ENCODE measurements at regions of chr15 and their contacts with region 1.

Region 1: GRCh38 chr15:90001683-90002427 is 731 bp downstream of the ZNF710 start:
- DNase-seq: peak; percentile 59 to 62
- ATAC-seq: peak; percentile 16 to 57 (median 38)
- H3K4me3 ChIP-seq: peak overlapping the region; percentile 54 to 90 (median 84)
- H3K27ac ChIP-seq: peak overlapping the region; percentile 44 to 97 (median 88)
- H3K4me1 ChIP-seq: peaks cover 11 to 67% (median 59%) of the 10 kb centered on the region in 9 donors
- H3K27me3 ChIP-seq: no peaks in the 10 kb centered on the region
- CTCF ChIP-seq: no peak

Region 2: DNA sequence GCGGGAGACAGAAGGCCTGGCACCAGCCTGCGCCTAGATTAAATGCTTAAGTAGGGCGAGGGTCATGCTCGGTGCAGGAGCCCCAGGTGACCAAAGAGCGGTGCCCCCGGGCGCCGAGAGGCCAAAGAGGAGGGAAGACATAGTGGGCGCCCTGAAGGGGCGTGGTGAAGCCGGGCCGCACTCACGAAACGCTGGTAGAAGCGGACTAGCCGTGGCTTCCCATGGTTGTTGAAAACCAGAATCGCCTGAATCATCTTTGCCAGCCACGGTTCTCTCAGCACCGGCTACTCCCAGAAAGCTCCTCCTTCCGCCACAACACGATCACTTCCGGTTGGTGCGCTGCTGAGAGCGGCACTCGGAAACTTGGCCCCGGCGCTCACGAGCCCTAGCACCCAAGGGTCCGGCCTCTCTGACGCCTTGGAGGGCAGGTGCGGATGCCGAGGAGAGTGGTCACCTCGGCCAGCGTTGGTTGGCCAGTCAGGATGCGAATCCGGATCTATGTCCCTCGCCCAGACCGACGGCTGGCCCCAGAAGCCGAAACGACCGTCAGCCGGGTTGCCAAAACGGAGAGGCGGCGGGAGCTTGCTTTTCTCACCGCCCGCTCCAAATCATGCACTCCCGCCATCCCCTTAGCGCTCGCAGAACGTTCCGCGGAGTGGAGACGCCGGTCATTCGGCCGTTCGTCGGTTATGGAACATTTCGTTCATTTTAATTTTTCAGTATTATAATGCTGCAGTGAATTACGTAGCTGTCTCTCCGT is 108.0 kb before region 1 on chr15 and contains the start of gene AP3S2:
- intact Hi-C with region 1: loop called in 3 of 10 experiments (anchors 5 kb)
- DNase-seq: peak; percentile 88 to 92
- ATAC-seq: peak; percentile 98 to 99 (median 99)
- H3K4me3 ChIP-seq: peak within 1 kb of the TSS; percentile 57 to 95 (median 82)
- H3K27ac ChIP-seq: peak within 1 kb of the TSS; percentile 57 to 96 (median 90)
- H3K4me1 ChIP-seq: peaks cover 0 to 42% (median 19%) of the 10 kb centered on the region in 9 donors
- H3K27me3 ChIP-seq: no peaks in the 10 kb centered on the region
- CTCF ChIP-seq: peak in 1 of 9 donors; percentile 16
- total RNA-seq, gene AP3S2: 37.0 to 55.5 (median 46.1) TPM

Region 3: GRCh38 chr15:89912674-89913396 is 89.0 kb before region 1 on chr15 and contains the start of gene ARPIN:
- intact Hi-C with region 1: loop called in 1 of 10 experiments (anchors 10 kb)
- DNase-seq: peak; percentile 56 to 72
- ATAC-seq: peak; percentile 81 to 93 (median 90)
- H3K4me3 ChIP-seq: peak within 1 kb of the TSS; percentile 53 to 95 (median 81)
- H3K27ac ChIP-seq: peak within 1 kb of the TSS in 9 of 10 donors; percentile 76 to 89 (median 81)
- H3K4me1 ChIP-seq: peaks cover 5 to 24% (median 16%) of the 10 kb centered on the region in 9 donors
- H3K27me3 ChIP-seq: peaks cover 0 to 9% (median 0%) of the 10 kb centered on the region in 7 donors
- CTCF ChIP-seq: peak in 2 of 9 donors; percentile 6 to 10
- total RNA-seq, gene ARPIN: 7.7 to 12.8 (median 11.3) TPM

Region 4: GRCh38 chr15:90062023-90062442 is 60.2 kb after region 1 on chr15:
- intact Hi-C with region 1: loop called in 8 of 10 experiments (anchors 5 to 10 kb)
- DNase-seq: peak; percentile 52 to 69
- ATAC-seq: peak in 3 of 8 donors; percentile 12 to 24 (median 15)
- H3K4me3 ChIP-seq: no peak overlapping the region
- H3K27ac ChIP-seq: peak overlapping the region in 6 of 10 donors; percentile 71 to 95 (median 91)
- H3K4me1 ChIP-seq: peaks cover 12 to 90% (median 68%) of the 10 kb centered on the region in 9 donors
- H3K27me3 ChIP-seq: no peaks in the 10 kb centered on the region
- CTCF ChIP-seq: no peak

Region 5: DNA sequence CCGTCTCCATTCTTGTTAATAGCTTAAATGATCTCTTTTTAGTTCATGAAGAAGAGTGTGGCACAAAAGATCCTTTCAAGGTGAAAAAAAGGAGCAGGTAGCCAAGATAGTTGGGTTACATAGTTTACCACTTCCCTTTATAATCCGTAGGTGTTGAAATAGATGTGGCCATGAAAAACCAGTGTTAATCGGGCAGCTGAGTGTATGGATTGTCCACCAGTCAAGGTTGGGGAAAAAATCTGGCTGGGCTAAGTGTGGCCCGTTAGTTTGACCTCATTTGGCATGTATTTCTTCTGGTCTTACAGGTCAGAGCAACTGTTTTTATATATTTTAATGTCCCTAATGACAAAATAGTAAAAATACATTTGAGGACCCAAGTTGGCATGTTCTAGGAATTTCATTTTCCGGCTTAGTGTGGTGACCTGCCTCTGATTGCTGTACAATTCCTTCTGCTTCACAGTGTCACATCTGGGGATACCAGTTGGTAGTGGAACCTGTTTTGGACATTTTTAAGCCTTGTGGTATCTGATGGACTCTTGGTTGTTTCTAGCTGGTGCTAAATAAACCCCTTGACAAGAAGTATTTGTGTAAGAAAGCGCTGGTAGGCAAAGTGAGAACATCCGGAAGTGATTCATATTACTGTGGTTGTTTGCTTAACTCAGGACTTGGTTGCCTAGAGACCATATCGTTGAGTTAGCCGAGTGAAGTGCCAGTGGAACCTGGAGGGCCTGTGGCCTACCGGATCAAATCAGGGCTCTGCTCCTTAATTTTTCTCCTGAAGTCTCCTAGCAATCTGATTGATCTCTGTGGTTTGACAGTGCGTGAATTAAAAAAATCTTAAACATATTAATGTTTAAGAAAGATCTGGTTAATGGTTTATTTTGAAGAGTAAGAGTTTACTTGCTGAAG is 398.8 kb after region 1 on chr15:
- intact Hi-C with region 1: no loop called
- DNase-seq: peak; percentile 39 to 85
- ATAC-seq: peak; percentile 93 to 98 (median 97)
- H3K4me3 ChIP-seq: peak overlapping the region in 7 of 10 donors; percentile 1 to 36 (median 20)
- H3K27ac ChIP-seq: peak overlapping the region; percentile 69 to 93 (median 87)
- H3K4me1 ChIP-seq: peaks cover 5 to 98% (median 78%) of the 10 kb centered on the region in 9 donors
- H3K27me3 ChIP-seq: no peaks in the 10 kb centered on the region
- CTCF ChIP-seq: no peak